Endothelial cell of umbilical vein (primary cell): ENCODE measurements at regions of chr6 and their contacts with region 1.

Region 1: GRCh38 chr6:41581381-41581991 is 35.3 kb downstream of the FOXP4 start:
- DNase-seq: peak; percentile 85
- H3K4me3 ChIP-seq: no peak overlapping the region
- H3K27ac ChIP-seq: peak overlapping the region; percentile 36
- H3K4me1 ChIP-seq: peaks cover 35% of the 10 kb centered on the region
- H3K27me3 ChIP-seq: no peaks in the 10 kb centered on the region
- CTCF ChIP-seq: no peak
- POLR2A ChIP-seq: no peak

Region 2: DNA sequence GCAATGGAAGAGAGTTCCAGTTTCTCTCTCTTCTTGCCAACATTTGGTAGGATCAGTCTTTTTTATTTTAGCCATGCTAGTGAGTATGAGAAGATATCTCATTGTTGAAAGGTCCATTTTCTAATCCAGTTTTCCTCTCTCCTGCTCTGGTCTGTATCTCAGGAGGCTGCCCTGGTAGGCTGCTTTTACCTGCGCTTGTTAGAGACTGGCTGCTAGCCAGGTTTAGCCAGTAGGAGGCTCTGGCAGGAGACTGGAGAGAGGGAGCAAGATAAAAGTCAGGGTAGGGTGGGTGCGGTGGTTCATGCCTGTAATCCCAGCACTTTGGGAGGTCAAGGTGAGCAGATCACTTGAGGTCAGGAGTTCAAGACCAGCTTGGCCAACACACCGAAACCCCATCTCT is 103.9 kb before region 1 on chr6:
- CTCF ChIA-PET with region 1: no interaction called
- POLR2A ChIA-PET with region 1: no interaction called
- dilution Hi-C with region 1: no loop called
- intact Hi-C with region 1: no loop called
- DNase-seq: no peak
- H3K4me3 ChIP-seq: no peak overlapping the region
- H3K27ac ChIP-seq: no peak overlapping the region
- H3K4me1 ChIP-seq: no peaks in the 10 kb centered on the region
- H3K27me3 ChIP-seq: peaks cover 4 to 13% of the 10 kb centered on the region in 2 experiments
- CTCF ChIP-seq: no peak
- POLR2A ChIP-seq: no peak

Region 3: DNA sequence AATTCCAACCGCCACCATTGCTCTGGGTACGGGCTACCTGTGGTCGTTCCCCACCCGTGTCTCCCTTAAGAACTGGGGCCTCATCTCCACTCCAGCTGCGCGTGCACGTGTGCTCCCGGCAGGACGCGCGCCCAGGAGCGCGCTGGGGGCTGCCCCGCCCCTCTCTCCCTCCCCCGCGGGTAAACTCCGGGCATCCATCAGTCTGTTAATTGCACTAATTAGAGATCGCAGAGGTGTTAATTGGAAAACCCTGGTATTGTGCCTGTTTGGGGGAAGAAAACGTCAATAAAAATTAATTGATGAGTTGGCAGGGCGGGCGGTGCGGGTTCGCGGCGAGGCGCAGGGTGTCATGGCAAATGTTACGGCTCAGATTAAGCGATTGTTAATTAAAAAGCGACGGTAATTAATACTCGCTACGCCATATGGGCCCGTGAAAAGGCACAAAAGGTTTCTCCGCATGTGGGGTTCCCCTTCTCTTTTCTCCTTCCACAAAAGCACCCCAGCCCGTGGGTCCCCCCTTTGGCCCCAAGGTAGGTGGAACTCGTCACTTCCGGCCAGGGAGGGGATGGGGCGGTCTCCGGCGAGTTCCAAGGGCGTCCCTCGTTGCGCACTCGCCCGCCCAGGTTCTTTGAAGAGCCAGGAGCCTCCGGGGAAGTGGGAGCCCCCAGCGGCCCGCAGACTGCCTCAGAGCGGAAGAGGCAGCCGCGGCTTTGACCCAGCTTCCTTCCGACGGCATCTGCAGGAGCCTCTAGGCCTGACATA is 20.9 kb before region 1 on chr6:
- CTCF ChIA-PET with region 1: interaction called, 3 read pairs
- POLR2A ChIA-PET with region 1: no interaction called
- dilution Hi-C with region 1: no loop called
- intact Hi-C with region 1: loop called (anchors 1 kb)
- DNase-seq: peak; percentile 22
- H3K4me3 ChIP-seq: peak overlapping the region; percentile 1 to 23 (median 9)
- H3K27ac ChIP-seq: no peak overlapping the region
- H3K4me1 ChIP-seq: peaks cover 8% of the 10 kb centered on the region
- H3K27me3 ChIP-seq: no peaks in the 10 kb centered on the region
- CTCF ChIP-seq: no peak
- POLR2A ChIP-seq: no peak

Region 4: DNA sequence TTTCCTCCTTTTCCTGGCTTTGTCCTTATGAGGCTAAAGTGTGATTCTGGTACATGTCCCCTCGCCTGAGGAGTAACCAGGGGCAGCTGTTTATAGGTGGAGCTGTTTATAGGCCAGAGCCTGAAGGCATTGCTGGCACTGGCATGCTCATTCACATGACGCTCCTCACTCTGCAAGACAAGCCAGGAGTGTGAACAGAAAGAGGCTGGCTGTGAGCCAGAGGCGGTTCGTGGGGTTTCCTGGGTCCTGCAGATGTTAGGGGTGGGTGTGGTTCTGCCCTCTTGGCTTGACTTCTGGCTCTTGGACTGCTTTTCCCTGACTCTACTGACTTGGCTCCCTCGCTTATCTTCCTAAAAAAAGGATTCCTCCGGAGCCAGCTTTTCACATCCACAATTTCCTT is 44.0 kb after region 1 on chr6:
- CTCF ChIA-PET with region 1: no interaction called
- POLR2A ChIA-PET with region 1: no interaction called
- dilution Hi-C with region 1: no loop called
- intact Hi-C with region 1: no loop called
- DNase-seq: no peak
- H3K4me3 ChIP-seq: no peak overlapping the region
- H3K27ac ChIP-seq: no peak overlapping the region
- H3K4me1 ChIP-seq: peaks cover 25% of the 10 kb centered on the region
- H3K27me3 ChIP-seq: peaks cover 0 to under 1% of the 10 kb centered on the region in 2 experiments
- CTCF ChIP-seq: no peak
- POLR2A ChIP-seq: no peak